ENCODE measurements at regions of chr4 and their contacts with region 1.

Region 1: GRCh38 chr4:82739316-82740179 is 59.0 kb downstream of the SCD5 start:
- DNase-seq: peak; percentile 71
- H3K4me3 Mint-ChIP-seq: no peak overlapping the region
- H3K27ac Mint-ChIP-seq: no peak overlapping the region
- H3K4me1 Mint-ChIP-seq: peaks cover 8% of the 10 kb centered on the region
- H3K27me3 Mint-ChIP-seq: no peaks in the 10 kb centered on the region
- CTCF ChIP-seq: peak; percentile 60

Region 2: DNA sequence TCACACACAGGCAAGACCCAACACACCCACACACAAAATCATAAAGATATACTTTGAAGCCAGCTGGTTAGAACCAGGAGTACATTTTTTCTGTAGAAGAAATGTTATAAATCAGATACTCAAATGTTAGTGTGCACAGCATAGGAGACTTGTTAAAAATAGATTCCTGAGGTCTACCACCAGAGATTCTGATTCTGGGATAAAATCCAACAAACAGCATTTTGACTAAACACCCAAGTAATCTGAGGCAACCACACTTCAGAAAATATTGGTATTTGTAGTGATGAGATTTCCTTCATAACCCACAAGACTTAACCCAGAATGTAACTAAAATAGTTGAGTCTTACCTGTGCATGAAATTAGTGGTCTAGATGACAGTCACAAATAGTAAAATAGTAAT is 667.6 kb before region 1 on chr4:
- CTCF ChIA-PET with region 1: no interaction called
- intact Hi-C with region 1: no loop called
- DNase-seq: no peak
- H3K4me3 Mint-ChIP-seq: no peak overlapping the region
- H3K27ac Mint-ChIP-seq: no peak overlapping the region
- H3K4me1 Mint-ChIP-seq: no peaks in the 10 kb centered on the region
- H3K27me3 Mint-ChIP-seq: no peaks in the 10 kb centered on the region
- CTCF ChIP-seq: no peak

Region 3: DNA sequence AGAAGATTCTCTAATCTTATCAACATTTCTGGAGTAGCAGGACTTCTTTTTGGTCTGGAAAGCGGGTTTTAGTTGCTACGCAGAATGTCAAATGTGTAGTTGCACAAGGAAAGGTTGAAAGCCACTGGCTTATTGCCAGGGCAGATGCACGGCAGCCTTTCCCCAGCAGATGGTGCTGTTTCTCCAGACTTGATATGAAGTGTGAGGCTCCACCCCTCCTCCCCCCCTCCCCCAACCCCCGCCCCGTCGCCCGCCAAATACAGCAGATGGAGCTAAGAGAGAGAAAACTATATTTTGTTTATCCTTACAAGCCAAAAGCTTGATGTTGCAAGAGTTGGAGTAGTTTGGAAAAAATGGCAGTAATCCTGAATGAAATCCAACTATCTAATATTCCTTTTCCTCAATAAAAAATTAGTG is 277.1 kb before region 1 on chr4:
- CTCF ChIA-PET with region 1: interaction called, 5 read pairs
- intact Hi-C with region 1: loop called (anchors 10 kb)
- DNase-seq: peak; percentile 79
- H3K4me3 Mint-ChIP-seq: no peak overlapping the region
- H3K27ac Mint-ChIP-seq: no peak overlapping the region
- H3K4me1 Mint-ChIP-seq: no peaks in the 10 kb centered on the region
- H3K27me3 Mint-ChIP-seq: no peaks in the 10 kb centered on the region
- CTCF ChIP-seq: peak; percentile 71

Measured in Calu3 (cell line).